ENCODE measurements at regions of chr15 and their contacts with region 1.

Region 1: GRCh38 chr15:66746231-66746605 is 44.2 kb downstream of the SMAD6 start:
- DNase-seq: no peak
- ATAC-seq: no peak
- H3K4me3 ChIP-seq: no peak overlapping the region
- H3K27ac ChIP-seq: peak overlapping the region; percentile 91
- H3K4me1 ChIP-seq: peaks cover 96% of the 10 kb centered on the region
- H3K27me3 ChIP-seq: no peaks in the 10 kb centered on the region
- CTCF ChIP-seq: no peak

Region 2: GRCh38 chr15:66611257-66612053 is 134.8 kb before region 1 on chr15:
- CTCF ChIA-PET with region 1: no interaction called
- POLR2A ChIA-PET with region 1: no interaction called
- in situ Hi-C with region 1: no loop called
- intact Hi-C with region 1: no loop called
- DNase-seq: no peak
- ATAC-seq: peak; percentile 85
- H3K4me3 ChIP-seq: no peak overlapping the region
- H3K27ac ChIP-seq: peak overlapping the region; percentile 8; the same call in 1 of the 2 replicates
- H3K4me1 ChIP-seq: no peaks in the 10 kb centered on the region
- H3K27me3 ChIP-seq: no peaks in the 10 kb centered on the region
- CTCF ChIP-seq: no peak

Region 3: GRCh38 chr15:66780172-66780972 is 34.2 kb after region 1 on chr15:
- CTCF ChIA-PET with region 1: no interaction called
- POLR2A ChIA-PET with region 1: interaction called, 12 read pairs
- in situ Hi-C with region 1: no loop called
- intact Hi-C with region 1: no loop called
- DNase-seq: no peak
- ATAC-seq: peak; percentile 71
- H3K4me3 ChIP-seq: no peak overlapping the region
- H3K27ac ChIP-seq: peak overlapping the region; percentile 86
- H3K4me1 ChIP-seq: peaks cover 63% of the 10 kb centered on the region
- H3K27me3 ChIP-seq: no peaks in the 10 kb centered on the region
- CTCF ChIP-seq: no peak

Region 4: GRCh38 chr15:66862878-66863335 is 116.7 kb after region 1 on chr15:
- CTCF ChIA-PET with region 1: interaction called, 12 read pairs
- POLR2A ChIA-PET with region 1: no interaction called
- in situ Hi-C with region 1: no loop called
- intact Hi-C with region 1: no loop called
- DNase-seq: peak; percentile 64
- ATAC-seq: peak; percentile 83
- H3K4me3 ChIP-seq: no peak overlapping the region
- H3K27ac ChIP-seq: peak overlapping the region; percentile 90
- H3K4me1 ChIP-seq: peaks cover 56% of the 10 kb centered on the region
- H3K27me3 ChIP-seq: no peaks in the 10 kb centered on the region
- CTCF ChIP-seq: peak; percentile 97